A673 (cell line): ENCODE measurements at regions of chr2 and their contacts with region 1.

Region 1: DNA sequence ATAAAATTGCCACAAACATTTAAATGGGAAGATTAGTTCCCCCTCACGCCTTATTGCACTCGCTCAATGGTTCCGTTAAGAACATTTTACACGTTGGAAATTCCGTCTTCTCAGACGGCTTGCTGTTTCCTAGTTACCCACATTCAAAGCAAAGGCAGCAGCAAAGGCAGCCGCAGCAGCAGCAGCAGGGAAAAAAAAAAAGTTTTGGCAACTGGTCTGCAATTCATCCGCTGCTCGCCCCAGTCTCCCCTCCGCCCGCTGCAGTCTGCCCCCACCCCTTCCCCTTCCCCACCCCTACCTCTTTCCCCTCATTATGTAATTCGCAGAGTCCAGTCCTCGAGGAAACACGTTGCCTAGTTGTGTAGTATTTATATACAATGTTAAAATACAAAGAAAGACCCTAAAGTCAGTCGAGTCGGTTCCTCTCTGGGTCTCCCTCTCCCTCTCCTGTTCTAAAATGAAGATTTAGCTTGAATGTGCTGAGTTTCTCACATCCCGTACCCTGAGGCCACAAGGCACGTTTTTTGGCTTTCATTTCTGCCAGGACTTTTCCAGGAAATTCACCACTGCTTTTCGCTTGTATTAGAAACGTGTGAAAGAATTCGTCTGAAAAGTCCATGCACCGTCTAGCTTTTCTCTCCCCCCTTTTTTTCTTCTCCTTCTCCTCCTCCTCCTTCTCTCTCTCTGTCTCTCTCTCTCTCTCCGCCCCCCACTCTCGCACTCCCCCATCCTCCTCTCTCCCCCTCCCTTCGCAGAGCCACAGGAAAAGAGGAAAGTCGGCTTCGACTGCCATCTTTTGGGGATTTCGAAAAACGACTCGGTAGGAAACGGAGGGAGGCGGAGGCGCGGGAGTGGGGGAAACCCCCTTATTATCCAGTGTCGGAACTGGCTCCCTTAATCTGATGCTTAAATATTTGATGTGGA is 140.0 kb downstream of the MEIS1 start:
- DNase-seq: peak; percentile 97
- H3K4me3 ChIP-seq: peak overlapping the region; percentile 65
- H3K27ac ChIP-seq: peak overlapping the region; percentile 92
- H3K4me1 ChIP-seq: peaks cover 75% of the 10 kb centered on the region
- H3K27me3 ChIP-seq: no peaks in the 10 kb centered on the region
- CTCF ChIP-seq: peak; percentile 74

Region 2: DNA sequence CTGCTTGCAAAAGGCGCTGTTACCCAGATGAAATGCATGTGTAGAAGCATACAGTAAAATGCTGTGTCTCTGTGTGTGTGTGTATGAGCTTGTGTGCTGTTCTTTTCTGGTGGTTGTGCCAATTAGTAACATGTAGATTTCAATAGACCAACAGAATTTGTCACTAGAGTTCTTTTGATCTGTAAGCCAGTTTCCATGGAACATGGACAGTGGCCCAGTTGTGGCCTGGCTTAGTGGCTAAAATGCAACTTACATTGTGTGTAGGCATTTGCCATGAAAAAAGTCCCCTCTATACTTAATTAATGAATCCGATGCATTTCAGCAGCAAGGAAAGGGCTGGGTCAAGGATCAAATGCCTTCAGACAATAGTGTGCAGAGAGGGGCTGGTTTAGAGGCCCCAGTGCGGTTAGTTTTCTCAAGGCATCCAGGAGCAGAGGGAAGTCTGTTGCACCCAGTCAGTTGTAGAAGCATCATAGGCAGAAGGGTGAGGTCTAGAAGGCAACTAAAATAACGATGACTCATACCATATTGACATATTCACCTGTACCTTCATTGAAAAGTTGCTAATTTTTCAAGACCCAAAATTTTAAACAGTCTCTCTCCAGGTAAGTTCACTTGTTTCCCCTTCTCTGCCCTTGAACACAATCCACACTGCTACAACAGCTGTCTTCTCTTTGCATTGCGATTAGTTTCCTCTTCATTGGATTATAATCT is 775.7 kb before region 1 on chr2:
- CTCF ChIA-PET with region 1: no interaction called
- POLR2A ChIA-PET with region 1: no interaction called
- intact Hi-C with region 1: loop called (anchors 5 kb)
- DNase-seq: no peak
- H3K4me3 ChIP-seq: no peak overlapping the region
- H3K27ac ChIP-seq: peak overlapping the region; percentile 12
- H3K4me1 ChIP-seq: peaks cover 43% of the 10 kb centered on the region
- H3K27me3 ChIP-seq: no peaks in the 10 kb centered on the region
- CTCF ChIP-seq: no peak

Region 3: DNA sequence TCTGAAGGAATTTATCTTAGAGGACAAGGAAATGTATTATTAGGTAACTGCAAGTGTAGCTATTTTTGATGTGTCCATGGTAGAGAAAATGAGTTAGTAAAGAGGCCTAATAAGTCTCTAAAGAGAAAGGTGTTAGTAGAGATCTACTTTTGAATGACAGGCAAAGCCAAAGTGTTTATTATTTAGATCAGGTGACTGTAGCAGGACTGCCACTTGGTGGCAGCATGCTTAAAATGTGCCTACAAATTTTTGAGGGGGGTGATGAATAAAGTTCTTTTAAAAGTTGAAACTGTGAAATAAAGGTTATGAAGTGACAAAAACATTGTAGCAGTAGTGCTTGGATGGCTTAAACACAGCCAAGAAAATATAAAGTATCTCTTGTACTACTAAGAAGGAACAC is 561.5 kb before region 1 on chr2:
- CTCF ChIA-PET with region 1: no interaction called
- POLR2A ChIA-PET with region 1: no interaction called
- intact Hi-C with region 1: no loop called
- DNase-seq: peak; percentile 55
- H3K4me3 ChIP-seq: no peak overlapping the region
- H3K27ac ChIP-seq: no peak overlapping the region
- H3K4me1 ChIP-seq: peaks cover 7% of the 10 kb centered on the region
- H3K27me3 ChIP-seq: no peaks in the 10 kb centered on the region
- CTCF ChIP-seq: peak; percentile 73

Region 4: GRCh38 chr2:66429071-66429477 is 145.9 kb before region 1 on chr2:
- CTCF ChIA-PET with region 1: interaction called, 22 read pairs
- POLR2A ChIA-PET with region 1: interaction called, 3 read pairs
- intact Hi-C with region 1: loop called (anchors 2 kb)
- DNase-seq: peak; percentile 87
- H3K4me3 ChIP-seq: no peak overlapping the region
- H3K27ac ChIP-seq: peak overlapping the region; percentile 77
- H3K4me1 ChIP-seq: peaks cover 63% of the 10 kb centered on the region
- H3K27me3 ChIP-seq: no peaks in the 10 kb centered on the region
- CTCF ChIP-seq: peak; percentile 94

Region 5: GRCh38 chr2:67234439-67234838 is 659.5 kb after region 1 on chr2:
- CTCF ChIA-PET with region 1: no interaction called
- POLR2A ChIA-PET with region 1: no interaction called
- intact Hi-C with region 1: loop called (anchors 5 kb)
- DNase-seq: peak; percentile 88
- H3K4me3 ChIP-seq: no peak overlapping the region
- H3K27ac ChIP-seq: no peak overlapping the region
- H3K4me1 ChIP-seq: peaks cover 25% of the 10 kb centered on the region
- H3K27me3 ChIP-seq: no peaks in the 10 kb centered on the region
- CTCF ChIP-seq: peak; percentile 84

Region 6: GRCh38 chr2:67650291-67651133 is 1075.5 kb after region 1 on chr2:
- CTCF ChIA-PET with region 1: interaction called, 4 read pairs
- POLR2A ChIA-PET with region 1: no interaction called
- intact Hi-C with region 1: loop called (anchors 5 kb)
- DNase-seq: peak; percentile 96
- H3K4me3 ChIP-seq: peak overlapping the region; percentile 21
- H3K27ac ChIP-seq: peak overlapping the region; percentile 70
- H3K4me1 ChIP-seq: peaks cover 26% of the 10 kb centered on the region
- H3K27me3 ChIP-seq: no peaks in the 10 kb centered on the region
- CTCF ChIP-seq: peak; percentile 89